ENCODE measurements at regions of chr2 and their contacts with region 1.

Region 1: DNA sequence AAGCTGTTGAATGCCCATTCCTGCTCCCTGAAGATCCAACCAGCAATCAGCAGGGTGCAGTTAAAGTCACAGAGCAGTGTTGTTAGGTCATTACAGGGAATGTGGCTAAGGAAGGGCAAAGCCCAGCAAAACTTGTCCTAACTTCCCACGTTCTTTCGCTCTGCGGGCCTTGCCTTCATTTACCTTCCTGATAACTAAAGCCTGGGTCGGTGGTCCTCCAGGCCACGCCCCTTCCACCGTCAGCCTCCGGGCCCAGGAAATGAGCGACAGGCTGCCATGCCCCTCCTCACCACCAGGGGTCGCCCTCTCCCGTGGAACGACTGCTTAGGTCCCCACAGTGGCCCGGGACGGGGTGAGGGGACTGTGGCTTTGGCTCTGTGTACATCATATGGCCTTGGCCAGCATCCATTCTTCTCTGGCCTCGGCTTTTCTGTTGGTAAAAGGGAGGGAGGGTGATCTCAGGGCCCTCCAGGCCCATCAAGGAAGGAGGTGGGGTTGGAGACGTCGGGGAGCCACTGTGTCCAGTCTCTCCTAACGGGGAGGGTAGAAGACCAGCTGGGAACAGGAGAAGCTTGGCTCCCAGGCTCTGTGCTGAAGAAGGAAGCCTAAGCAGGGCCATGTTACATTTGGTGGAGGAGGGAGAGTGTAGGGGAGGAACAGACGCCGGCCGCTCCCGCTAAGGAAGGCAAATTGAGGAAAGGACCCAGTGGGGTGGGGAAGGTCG is 2.2 kb downstream of the SH2D6 start:
- DNase-seq: peak; percentile 90
- H3K4me3 Mint-ChIP-seq: peak overlapping the region; percentile 38
- H3K27ac Mint-ChIP-seq: peak overlapping the region; percentile 100
- H3K4me1 Mint-ChIP-seq: peaks cover 35% of the 10 kb centered on the region
- H3K27me3 Mint-ChIP-seq: no peaks in the 10 kb centered on the region

Region 2: GRCh38 chr2:85430752-85431569 is 10.3 kb after region 1 on chr2:
- CTCF ChIA-PET with region 1: interaction called, 23 read pairs
- POLR2A ChIA-PET with region 1: no interaction called
- DNase-seq: no peak
- H3K4me3 Mint-ChIP-seq: no peak overlapping the region
- H3K27ac Mint-ChIP-seq: no peak overlapping the region
- H3K4me1 Mint-ChIP-seq: peaks cover 7% of the 10 kb centered on the region
- H3K27me3 Mint-ChIP-seq: no peaks in the 10 kb centered on the region

Region 3: GRCh38 chr2:85538486-85539360 is 118.0 kb after region 1 on chr2 and contains the start of gene MAT2A:
- CTCF ChIA-PET with region 1: interaction called, 11 read pairs
- POLR2A ChIA-PET with region 1: interaction called, 8 read pairs
- DNase-seq: peak; percentile 84
- H3K4me3 Mint-ChIP-seq: peak within 1 kb of the TSS; percentile 97
- H3K27ac Mint-ChIP-seq: peak within 1 kb of the TSS; percentile 96
- H3K4me1 Mint-ChIP-seq: peaks cover 50% of the 10 kb centered on the region
- H3K27me3 Mint-ChIP-seq: no peaks in the 10 kb centered on the region
- total RNA-seq, gene MAT2A: 263 to 269 TPM

Region 4: GRCh38 chr2:85611705-85612587 is 191.2 kb after region 1 on chr2 and contains the start of gene C2orf68:
- CTCF ChIA-PET with region 1: no interaction called
- POLR2A ChIA-PET with region 1: no interaction called
- DNase-seq: peak; percentile 89
- H3K4me3 Mint-ChIP-seq: peak within 1 kb of the TSS; percentile 90
- H3K27ac Mint-ChIP-seq: peak within 1 kb of the TSS; percentile 91
- H3K4me1 Mint-ChIP-seq: peaks cover 34% of the 10 kb centered on the region
- H3K27me3 Mint-ChIP-seq: no peaks in the 10 kb centered on the region
- total RNA-seq, gene C2orf68: 46.1 to 55.3 TPM